HepG2 (cell line): ENCODE measurements at regions of chr6 and their contacts with region 1.

Region 1: GRCh38 chr6:52162940-52163908 is 23.0 kb upstream of the IL17A start:
- DNase-seq: peak; percentile 53
- ATAC-seq: peak; percentile 87
- H3K4me3 ChIP-seq: no peak overlapping the region
- H3K27ac ChIP-seq: no peak overlapping the region
- H3K4me1 ChIP-seq: peaks cover 25% of the 10 kb centered on the region
- H3K27me3 ChIP-seq: no peaks in the 10 kb centered on the region
- CTCF ChIP-seq: peak; percentile 85
- EP300 ChIP-seq: no peak
- POLR2A ChIP-seq: no peak
- RAD21 ChIP-seq: peak; percentile 88

Region 2: GRCh38 chr6:51049983-51050877 is 1113.0 kb before region 1 on chr6:
- CTCF ChIA-PET with region 1: no interaction called
- POLR2A ChIA-PET with region 1: no interaction called
- in situ Hi-C with region 1: no loop called
- intact Hi-C with region 1: no loop called
- DNase-seq: no peak
- ATAC-seq: no peak
- H3K4me3 ChIP-seq: no peak overlapping the region
- H3K27ac ChIP-seq: no peak overlapping the region
- H3K4me1 ChIP-seq: no peaks in the 10 kb centered on the region
- H3K27me3 ChIP-seq: no peaks in the 10 kb centered on the region
- CTCF ChIP-seq: no peak
- EP300 ChIP-seq: no peak
- POLR2A ChIP-seq: no peak
- RAD21 ChIP-seq: no peak

Region 3: GRCh38 chr6:52176550-52176949 is 13.3 kb after region 1 on chr6:
- CTCF ChIA-PET with region 1: no interaction called
- POLR2A ChIA-PET with region 1: no interaction called
- in situ Hi-C with region 1: no loop called
- intact Hi-C with region 1: no loop called
- DNase-seq: no peak
- ATAC-seq: no peak
- H3K4me3 ChIP-seq: no peak overlapping the region
- H3K27ac ChIP-seq: no peak overlapping the region
- H3K4me1 ChIP-seq: no peaks in the 10 kb centered on the region
- H3K27me3 ChIP-seq: 0 out of 5 replicates have a peak, but pooled peaks cover 0 to 3% of the 10 kb centered on the region in 2 experiments
- CTCF ChIP-seq: no peak
- EP300 ChIP-seq: no peak
- POLR2A ChIP-seq: no peak
- RAD21 ChIP-seq: no peak

Region 4: DNA sequence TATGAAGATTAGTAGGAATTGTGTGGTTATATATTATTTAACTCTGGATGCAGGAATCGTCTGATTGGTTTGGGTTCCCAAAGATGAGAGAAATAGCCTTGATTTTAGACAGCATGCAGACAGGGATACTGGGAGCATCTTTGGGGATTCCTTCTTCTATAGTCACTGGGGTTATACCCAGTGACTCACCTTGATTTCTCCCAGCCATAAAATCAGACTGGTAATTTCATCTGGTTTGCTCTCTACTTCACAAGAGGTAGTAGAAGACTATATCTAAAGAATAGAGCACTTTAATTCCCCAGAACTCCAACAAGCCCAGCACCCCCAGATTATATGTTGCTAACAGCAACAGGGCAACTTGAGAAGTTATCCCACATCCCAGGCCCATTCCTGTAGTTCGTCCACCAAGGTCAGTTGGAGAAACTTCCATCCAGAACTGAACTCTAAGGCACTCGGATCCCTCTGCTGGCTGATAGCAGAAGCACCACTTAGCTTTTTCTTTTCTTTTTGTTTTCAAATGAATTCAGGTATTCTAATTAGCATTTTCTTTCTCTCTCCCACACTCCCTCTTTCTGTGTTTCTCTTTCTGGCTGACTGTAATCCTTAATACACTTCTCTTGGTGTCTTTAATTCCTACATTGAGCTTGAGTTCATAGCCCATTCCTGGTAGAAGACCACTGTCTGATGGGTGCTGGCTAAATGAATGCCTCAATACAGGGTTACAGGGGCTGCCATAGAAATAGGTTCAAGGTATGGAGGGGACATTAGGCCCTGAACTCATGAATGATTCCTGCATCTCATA is 236.5 kb after region 1 on chr6:
- CTCF ChIA-PET with region 1: interaction called, 7 read pairs
- POLR2A ChIA-PET with region 1: no interaction called
- in situ Hi-C with region 1: loop called (anchors 10 kb)
- intact Hi-C with region 1: loop called (anchors 2 kb)
- DNase-seq: peak; percentile 77
- ATAC-seq: peak; percentile 88
- H3K4me3 ChIP-seq: no peak overlapping the region
- H3K27ac ChIP-seq: peak overlapping the region; percentile 49
- H3K4me1 ChIP-seq: peaks cover 57% of the 10 kb centered on the region
- H3K27me3 ChIP-seq: no peaks in the 10 kb centered on the region
- CTCF ChIP-seq: peak; percentile 89
- EP300 ChIP-seq: peak in 1 of 2 experiments; percentile 38; a peak in 1 of 4 replicates
- POLR2A ChIP-seq: no peak
- RAD21 ChIP-seq: peak; percentile 94